Sciatic nerve (tissue), 2 donors: ENCODE measurements at regions of chr1 and their contacts with region 1.

Region 1: DNA sequence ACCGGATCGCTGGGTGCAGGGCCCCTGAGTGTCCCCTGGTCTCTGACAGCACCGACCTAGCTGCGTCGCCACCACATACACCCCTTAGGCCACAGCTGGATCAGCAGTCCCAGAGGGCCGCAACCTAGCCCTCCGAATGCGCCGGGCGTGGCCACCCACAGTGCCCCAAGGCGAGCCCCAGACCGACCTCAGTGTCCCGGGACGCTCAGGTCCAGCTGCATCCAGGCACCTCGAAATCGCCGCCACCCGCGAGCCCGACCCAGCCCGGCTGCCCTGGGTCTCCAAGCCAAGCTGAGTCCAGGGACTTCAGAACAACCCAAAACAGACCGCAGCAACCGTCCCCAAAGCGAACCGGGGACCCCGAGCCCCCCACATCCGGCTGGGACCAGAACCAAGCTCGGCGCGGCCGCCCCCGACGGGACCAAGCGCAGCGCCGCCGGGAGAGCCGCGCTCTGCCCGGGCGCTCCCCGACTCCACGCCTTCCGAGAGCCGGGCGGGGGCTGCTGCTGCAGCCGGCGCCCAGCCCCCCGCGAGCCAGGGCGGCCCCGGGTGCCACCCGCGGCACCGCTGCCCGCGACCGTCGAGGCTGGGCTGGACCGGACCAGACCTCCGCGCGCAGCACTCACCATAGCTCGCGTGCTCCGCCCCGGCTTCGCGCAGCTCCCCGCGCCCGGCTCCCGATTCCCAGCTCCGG is 54.6 kb upstream of the ECE1 start:
- DNase-seq: no peak
- ATAC-seq: peak; percentile 5

Region 2: DNA sequence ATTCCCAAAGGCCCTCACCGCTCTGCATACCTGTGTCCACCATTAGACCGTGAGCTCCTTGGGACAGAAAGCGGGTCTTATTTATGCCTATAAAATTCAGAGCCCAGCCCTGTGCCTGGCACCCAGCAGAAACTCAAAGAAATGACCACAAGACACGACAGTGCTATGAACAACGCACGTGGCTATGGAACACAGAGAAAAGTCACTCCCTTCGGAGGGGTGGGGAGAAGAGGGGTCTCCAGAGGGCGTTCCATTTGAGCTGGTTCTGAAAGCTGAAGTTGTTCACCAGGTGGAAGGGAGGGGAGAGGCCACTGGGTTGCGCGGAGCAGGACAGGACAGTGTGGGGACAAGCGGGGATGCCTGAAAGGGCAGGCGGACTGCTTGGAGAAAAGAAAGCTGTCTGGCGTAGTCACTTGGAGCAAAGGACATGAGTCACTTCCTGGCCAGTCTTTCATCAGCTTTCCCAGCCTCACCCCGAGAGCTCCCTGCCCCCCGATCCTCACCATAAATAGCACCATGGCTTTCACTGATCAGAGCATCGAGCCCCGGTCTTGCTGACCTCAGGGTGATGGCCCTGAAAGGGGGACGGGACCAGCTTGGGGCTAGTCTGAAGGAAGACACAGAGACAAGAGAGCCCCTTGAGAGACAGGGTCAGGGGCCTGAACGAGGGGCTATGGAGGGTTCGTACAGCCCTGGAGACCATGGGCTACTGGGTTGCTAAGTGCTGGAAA is 83.2 kb before region 1 on chr1:
- intact Hi-C with region 1: loop called (anchors 5 kb)
- DNase-seq: peak; percentile 77
- ATAC-seq: peak; percentile 86